ENCODE measurements at regions of chr15 and their contacts with region 1.

Region 1: DNA sequence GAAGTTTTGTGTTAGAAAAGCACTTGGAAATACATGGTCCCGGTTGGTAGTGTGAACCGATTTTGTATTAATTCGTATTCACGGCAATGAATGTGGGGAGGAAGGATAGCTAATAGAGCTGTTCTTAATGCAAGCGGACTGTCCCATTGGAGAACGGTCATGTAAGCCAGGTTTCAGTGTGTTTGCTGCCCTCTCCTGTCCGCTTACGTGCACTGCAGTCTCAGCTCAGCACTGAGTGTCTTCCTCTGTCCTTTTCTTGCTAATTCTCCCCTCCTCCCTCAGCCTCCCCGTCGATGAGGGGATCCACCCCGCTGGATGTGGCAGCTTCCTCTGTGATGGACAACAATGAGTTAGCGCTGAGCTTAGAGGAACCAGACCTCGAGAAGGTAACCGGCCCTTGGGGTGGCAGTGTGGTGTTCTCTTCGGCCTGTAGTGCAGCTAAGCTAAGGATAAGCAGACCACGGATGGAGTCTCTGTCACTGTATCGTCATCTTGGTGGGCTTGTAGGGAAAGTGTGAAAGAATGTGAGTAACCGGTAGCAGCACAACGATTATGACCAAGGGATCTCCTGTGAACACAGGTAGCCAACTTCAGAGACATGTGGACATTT is 267.5 kb upstream of the CHRM5 start:
- DNase-seq: peak; percentile 15 to 89 (median 76)

Region 2: GRCh38 chr15:33392453-33392852 is 308.3 kb before region 1 on chr15:
- intact Hi-C with region 1: loop called (anchors 10 kb)
- DNase-seq: no peak

Region 3: DNA sequence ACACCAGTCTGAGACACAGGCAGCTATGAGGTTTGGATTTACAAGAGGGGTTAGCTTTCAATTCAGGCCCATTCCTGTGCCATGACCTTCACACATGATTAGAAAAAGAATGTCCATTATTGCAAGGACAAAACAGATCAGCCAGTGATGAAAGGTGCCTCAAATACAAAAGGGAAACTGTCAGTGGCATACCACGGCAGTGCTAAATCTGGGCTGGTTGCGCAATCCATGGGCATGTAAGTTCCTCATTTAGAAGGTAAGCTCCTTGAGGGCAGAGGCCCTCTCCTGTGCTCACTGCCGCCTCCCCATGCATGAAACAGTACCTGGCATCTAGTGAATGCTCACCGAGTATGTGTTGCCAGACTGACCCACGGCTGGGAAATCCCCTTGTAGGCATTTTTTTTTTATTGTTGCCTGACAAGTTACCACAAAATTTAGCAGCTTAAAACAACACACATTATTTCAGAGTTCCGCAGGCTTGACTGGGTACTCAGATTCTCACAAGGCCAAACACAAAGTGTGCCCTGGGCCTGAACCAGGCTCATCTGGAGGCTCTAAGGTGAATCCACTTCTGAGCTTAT is 44.6 kb before region 1 on chr15:
- intact Hi-C with region 1: no loop called
- DNase-seq: no peak

Region 4: GRCh38 chr15:35107122-35107521 is 1406.3 kb after region 1 on chr15:
- intact Hi-C with region 1: no loop called
- DNase-seq: no peak